Activated CD4-positive, alpha-beta T cell treated with anti-CD3 and anti-CD28 coated beads, Interleukin-2, amount 10 ng/mL, durations not matched to agents 24 days and 14 days (primary cell): ENCODE measurements at regions of chr3 and their contacts with region 1.

Region 1: GRCh38 chr3:197320582-197320981 is 22.2 kb upstream of the DLG1 start:
- DNase-seq: no peak
- H3K4me3 Mint-ChIP-seq: no peak overlapping the region
- H3K27ac Mint-ChIP-seq: no peak overlapping the region
- H3K4me1 Mint-ChIP-seq: no peaks in the 10 kb centered on the region
- H3K27me3 Mint-ChIP-seq: peaks cover 42% of the 10 kb centered on the region

Region 2: GRCh38 chr3:196927571-196928453 is 392.8 kb before region 1 on chr3:
- intact Hi-C with region 1: no loop called
- DNase-seq: no peak
- H3K4me3 Mint-ChIP-seq: no peak overlapping the region
- H3K27ac Mint-ChIP-seq: no peak overlapping the region
- H3K4me1 Mint-ChIP-seq: no peaks in the 10 kb centered on the region
- H3K27me3 Mint-ChIP-seq: no peaks in the 10 kb centered on the region

Region 3: DNA sequence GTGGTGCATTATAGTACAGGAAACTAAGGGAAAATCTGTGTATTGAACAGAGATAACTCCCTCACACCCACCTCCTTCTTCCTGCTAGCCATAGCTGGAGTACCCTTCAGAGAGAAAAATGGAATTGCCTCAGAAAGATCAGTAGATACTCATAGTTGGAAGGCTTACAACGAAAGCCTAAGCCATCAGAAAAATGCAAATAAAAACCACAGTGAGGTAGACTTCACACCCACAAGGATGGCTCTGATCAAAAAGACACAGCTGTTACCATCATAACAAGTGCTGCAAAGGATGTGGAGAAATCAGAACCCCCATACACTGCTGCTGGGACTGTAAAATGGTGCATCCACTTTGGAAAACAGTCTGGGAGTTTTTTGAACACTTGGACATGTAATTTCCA is 14.7 kb before region 1 on chr3:
- intact Hi-C with region 1: loop called (anchors 2 kb)
- DNase-seq: peak; percentile 72
- H3K4me3 Mint-ChIP-seq: peak overlapping the region; percentile 22
- H3K27ac Mint-ChIP-seq: peak overlapping the region; percentile 44
- H3K4me1 Mint-ChIP-seq: peaks cover 33% of the 10 kb centered on the region
- H3K27me3 Mint-ChIP-seq: peaks cover 24% of the 10 kb centered on the region

Region 4: DNA sequence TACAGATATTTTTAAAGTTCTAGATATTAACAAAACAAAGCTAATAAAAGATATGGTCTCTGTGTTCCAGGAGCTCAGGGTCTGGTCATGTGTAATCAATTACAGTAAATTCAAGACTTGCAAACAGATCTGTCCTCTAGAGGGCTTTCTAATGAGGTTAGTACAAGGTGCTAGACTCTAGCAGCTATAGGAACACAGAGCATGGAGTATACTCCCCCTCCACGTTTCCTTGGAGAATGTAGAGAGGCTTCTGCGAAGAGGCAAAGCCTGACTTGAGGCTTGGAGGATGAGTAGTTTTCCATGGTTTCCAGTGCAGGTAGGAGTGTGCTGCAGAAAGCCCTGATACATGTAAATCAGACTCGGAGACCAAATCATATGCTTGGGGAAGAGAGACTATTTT is 10.5 kb after region 1 on chr3:
- intact Hi-C with region 1: no loop called
- DNase-seq: no peak
- H3K4me3 Mint-ChIP-seq: no peak overlapping the region
- H3K27ac Mint-ChIP-seq: no peak overlapping the region
- H3K4me1 Mint-ChIP-seq: peaks cover 2% of the 10 kb centered on the region
- H3K27me3 Mint-ChIP-seq: peaks cover 15% of the 10 kb centered on the region